ENCODE measurements at regions of chr14 and their contacts with region 1.

Region 1: GRCh38 chr14:24299255-24300195 is at the starts of genes DHRS1 and NOP9:
- DNase-seq: peak; percentile 93
- ATAC-seq: peak; percentile 80
- H3K4me3 ChIP-seq: peak within 1 kb of the TSS; percentile 79 to 98 (median 89)
- H3K27ac ChIP-seq: peak within 1 kb of the TSS; percentile 83
- H3K4me1 ChIP-seq: peaks cover 45% of the 10 kb centered on the region
- H3K27me3 ChIP-seq: no peaks in the 10 kb centered on the region; a peak in 1 of 5 replicates
- CTCF ChIP-seq: peak; percentile 53
- EP300 ChIP-seq: peak; percentile 63 to 81; a peak in 3 of 4 replicates
- POLR2A ChIP-seq: peak in 1 of 2 experiments; percentile 88; a peak in 2 of 4 replicates
- RAD21 ChIP-seq: peak; percentile 54; the same call in 1 of the 2 replicates
- total RNA-seq, gene DHRS1: 46.3 and 60.8 TPM in 2 replicates
- total RNA-seq, gene NOP9: 61.6 and 64.5 TPM in 2 replicates

Region 2: GRCh38 chr14:23301288-23301968 is 998.1 kb before region 1 on chr14:
- CTCF ChIA-PET with region 1: no interaction called
- POLR2A ChIA-PET with region 1: no interaction called
- in situ Hi-C with region 1: no loop called
- intact Hi-C with region 1: loop called (anchors 10 kb)
- DNase-seq: peak; percentile 100
- ATAC-seq: peak; percentile 87
- H3K4me3 ChIP-seq: peak overlapping the region; percentile 67 to 88 (median 75)
- H3K27ac ChIP-seq: peak overlapping the region; percentile 91
- H3K4me1 ChIP-seq: peaks cover 57% of the 10 kb centered on the region
- H3K27me3 ChIP-seq: no peaks in the 10 kb centered on the region; a peak in 1 of 5 replicates
- CTCF ChIP-seq: peak; percentile 92
- EP300 ChIP-seq: peak in 1 of 2 experiments; percentile 54; a peak in 2 of 4 replicates
- POLR2A ChIP-seq: no peak
- RAD21 ChIP-seq: peak; percentile 87

Region 3: DNA sequence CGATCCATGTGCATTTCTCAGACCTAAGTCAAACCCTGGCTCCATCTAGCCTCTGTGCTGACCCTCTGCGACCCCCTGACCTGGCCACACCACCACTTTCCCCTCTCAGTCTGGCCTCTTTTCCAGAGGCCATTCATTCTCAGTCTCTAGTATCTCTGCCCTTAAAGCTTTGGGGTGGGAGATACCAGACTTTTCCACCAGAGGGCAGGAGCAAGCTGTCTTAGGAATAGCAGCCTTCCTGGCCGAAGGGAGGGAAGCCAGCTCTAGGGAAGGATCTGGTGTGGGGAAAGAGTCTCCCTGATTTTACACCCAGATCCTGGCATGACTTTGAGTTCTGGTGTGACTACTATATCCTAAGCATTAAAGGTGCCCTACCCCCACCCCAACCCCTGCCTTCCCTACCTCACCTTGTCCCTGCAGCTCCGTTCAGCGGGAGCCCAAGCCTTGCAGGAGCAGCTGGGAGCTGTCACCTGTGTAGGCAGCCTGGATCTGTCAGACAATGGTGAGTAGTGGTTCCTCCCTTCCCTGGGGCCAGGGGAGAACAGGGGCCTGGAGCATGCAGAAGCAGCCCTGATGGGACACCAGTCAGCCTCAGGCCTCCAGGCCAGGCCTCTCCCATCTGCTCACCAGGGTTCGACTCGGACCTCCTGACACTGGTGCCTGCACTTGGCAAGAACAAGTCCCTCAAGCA is 241.1 kb before region 1 on chr14:
- CTCF ChIA-PET with region 1: interaction called, 3 read pairs
- POLR2A ChIA-PET with region 1: interaction called, 3 read pairs
- in situ Hi-C with region 1: no loop called
- intact Hi-C with region 1: loop called (anchors 2 kb)
- DNase-seq: peak; percentile 89
- ATAC-seq: peak; percentile 84
- H3K4me3 ChIP-seq: no peak overlapping the region
- H3K27ac ChIP-seq: no peak overlapping the region
- H3K4me1 ChIP-seq: peaks cover 40% of the 10 kb centered on the region
- H3K27me3 ChIP-seq: peaks cover 19 to 48% of the 10 kb centered on the region in 2 experiments; a peak in 4 of 5 replicates
- CTCF ChIP-seq: peak; percentile 99
- EP300 ChIP-seq: no peak
- POLR2A ChIP-seq: no peak
- RAD21 ChIP-seq: peak; percentile 99

Region 4: GRCh38 chr14:24188251-24189058 is 111.1 kb before region 1 on chr14 and contains the start of gene IPO4:
- CTCF ChIA-PET with region 1: no interaction called
- POLR2A ChIA-PET with region 1: interaction called, 11 read pairs
- in situ Hi-C with region 1: no loop called
- intact Hi-C with region 1: no loop called
- DNase-seq: peak; percentile 100
- ATAC-seq: peak; percentile 88
- H3K4me3 ChIP-seq: peak within 1 kb of the TSS; percentile 70 to 92 (median 77)
- H3K27ac ChIP-seq: peak within 1 kb of the TSS; percentile 64
- H3K4me1 ChIP-seq: peaks cover 42% of the 10 kb centered on the region
- H3K27me3 ChIP-seq: no peaks in the 10 kb centered on the region
- CTCF ChIP-seq: peak; percentile 49
- EP300 ChIP-seq: peak; percentile 85 to 87; a peak in 3 of 4 replicates
- POLR2A ChIP-seq: peak in 1 of 2 experiments; percentile 98; a peak in 2 of 4 replicates
- RAD21 ChIP-seq: peak; percentile 77
- total RNA-seq, gene IPO4: 149 and 179 TPM in 2 replicates

Region 5: GRCh38 chr14:24232121-24232644 is 67.3 kb before region 1 on chr14 and contains the start of gene NEDD8:
- CTCF ChIA-PET with region 1: no interaction called
- POLR2A ChIA-PET with region 1: interaction called, 850 read pairs
- in situ Hi-C with region 1: no loop called
- intact Hi-C with region 1: no loop called
- DNase-seq: peak; percentile 99
- ATAC-seq: peak; percentile 85
- H3K4me3 ChIP-seq: peak within 1 kb of the TSS; percentile 83 to 91 (median 85)
- H3K27ac ChIP-seq: peak within 1 kb of the TSS; percentile 84
- H3K4me1 ChIP-seq: peaks cover 47% of the 10 kb centered on the region
- H3K27me3 ChIP-seq: peaks cover 0 to 4% of the 10 kb centered on the region in 2 experiments; a peak in 1 of 5 replicates
- CTCF ChIP-seq: no peak; the same call in none of the 2 replicates
- EP300 ChIP-seq: no peak; a peak in 1 of 4 replicates
- POLR2A ChIP-seq: peak in 1 of 2 experiments; percentile 63; a peak in 2 of 4 replicates
- RAD21 ChIP-seq: no peak; the same call in 1 of the 2 replicates
- total RNA-seq, gene NEDD8: 713 and 818 TPM in 2 replicates

Region 6: DNA sequence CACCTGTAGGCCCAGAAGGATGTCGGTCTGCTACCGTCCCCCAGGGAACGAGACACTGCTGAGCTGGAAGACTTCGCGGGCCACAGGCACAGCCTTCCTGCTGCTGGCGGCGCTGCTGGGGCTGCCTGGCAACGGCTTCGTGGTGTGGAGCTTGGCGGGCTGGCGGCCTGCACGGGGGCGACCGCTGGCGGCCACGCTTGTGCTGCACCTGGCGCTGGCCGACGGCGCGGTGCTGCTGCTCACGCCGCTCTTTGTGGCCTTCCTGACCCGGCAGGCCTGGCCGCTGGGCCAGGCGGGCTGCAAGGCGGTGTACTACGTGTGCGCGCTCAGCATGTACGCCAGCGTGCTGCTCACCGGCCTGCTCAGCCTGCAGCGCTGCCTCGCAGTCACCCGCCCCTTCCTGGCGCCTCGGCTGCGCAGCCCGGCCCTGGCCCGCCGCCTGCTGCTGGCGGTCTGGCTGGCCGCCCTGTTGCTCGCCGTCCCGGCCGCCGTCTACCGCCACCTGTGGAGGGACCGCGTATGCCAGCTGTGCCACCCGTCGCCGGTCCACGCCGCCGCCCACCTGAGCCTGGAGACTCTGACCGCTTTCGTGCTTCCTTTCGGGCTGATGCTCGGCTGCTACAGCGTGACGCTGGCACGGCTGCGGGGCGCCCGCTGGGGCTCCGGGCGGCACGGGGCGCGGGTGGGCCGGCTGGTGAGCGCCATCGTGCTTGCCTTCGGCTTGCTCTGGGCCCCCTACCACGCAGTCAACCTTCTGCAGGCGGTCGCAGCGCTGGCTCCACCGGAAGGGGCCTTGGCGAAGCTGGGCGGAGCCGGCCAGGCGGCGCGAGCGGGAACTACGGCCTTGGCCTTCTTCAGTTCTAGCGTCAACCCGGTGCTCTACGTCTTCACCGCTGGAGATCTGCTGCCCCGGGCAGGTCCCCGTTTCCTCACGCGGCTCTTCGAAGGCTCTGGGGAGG is 11.4 kb after region 1 on chr14 and contains the start of gene LTB4R:
- CTCF ChIA-PET with region 1: interaction called, 45 read pairs
- POLR2A ChIA-PET with region 1: interaction called, 213 read pairs
- in situ Hi-C with region 1: no loop called
- intact Hi-C with region 1: loop called (anchors 1 kb)
- DNase-seq: no peak
- ATAC-seq: no peak
- H3K4me3 ChIP-seq: no peak within 1 kb of the TSS
- H3K27ac ChIP-seq: peak within 1 kb of the TSS; percentile 4
- H3K4me1 ChIP-seq: peaks cover 61% of the 10 kb centered on the region
- H3K27me3 ChIP-seq: no peaks in the 10 kb centered on the region; a peak in 1 of 5 replicates
- CTCF ChIP-seq: no peak
- EP300 ChIP-seq: no peak
- POLR2A ChIP-seq: no peak
- RAD21 ChIP-seq: no peak
- total RNA-seq, gene LTB4R: 1.00 and 3.2 TPM in 2 replicates

Measured in HepG2 (cell line).